ENCODE measurements at regions of chr13 and their contacts with region 1.

Region 1: GRCh38 chr13:22091222-22091970 is 420.5 kb downstream of the FGF9 start:
- DNase-seq: no peak
- H3K4me3 ChIP-seq: no peak overlapping the region
- H3K27ac ChIP-seq: peak overlapping the region in 1 of 2 donors; percentile 19
- H3K4me1 ChIP-seq: peaks cover 0 to 10% of the 10 kb centered on the region in 2 donors
- H3K27me3 ChIP-seq: no peaks in the 10 kb centered on the region
- CTCF ChIP-seq: no peak

Region 2: DNA sequence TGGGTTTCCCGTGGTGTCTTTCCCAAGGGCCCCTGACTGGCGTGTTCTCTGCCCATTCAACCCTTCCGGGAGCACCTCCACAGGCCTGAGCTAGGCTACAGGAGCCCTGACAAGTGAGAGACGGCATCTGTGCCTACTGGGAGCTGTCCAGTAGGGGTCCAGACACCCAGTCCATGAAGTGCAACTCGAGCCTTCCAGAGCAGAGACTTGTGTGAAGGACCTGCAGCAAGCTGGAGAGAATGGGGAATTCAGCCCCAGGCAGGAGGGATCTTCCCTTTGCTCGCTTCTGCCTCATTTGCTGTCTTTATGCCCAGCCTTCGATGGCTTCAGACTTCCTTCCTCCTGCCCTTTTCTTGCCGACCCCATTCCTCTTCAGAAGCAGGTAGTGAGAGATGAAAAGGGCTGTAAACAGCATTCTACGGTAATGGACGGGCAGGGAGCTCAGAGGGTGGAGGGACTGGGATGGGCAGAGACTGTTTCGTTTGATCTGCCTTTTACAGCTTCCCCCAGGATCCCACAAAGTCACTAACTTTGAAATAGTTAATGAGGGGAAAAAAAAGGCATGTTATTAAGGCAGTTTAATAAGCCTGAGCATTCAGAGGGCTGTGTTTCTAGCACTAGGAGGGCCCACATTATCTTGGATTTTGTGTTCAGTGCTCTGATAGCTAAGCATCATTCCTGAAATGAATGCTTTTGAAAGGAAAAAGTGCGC is 93.0 kb before region 1 on chr13:
- intact Hi-C with region 1: no loop called
- DNase-seq: no peak
- H3K4me3 ChIP-seq: no peak overlapping the region
- H3K27ac ChIP-seq: no peak overlapping the region
- H3K4me1 ChIP-seq: no peaks in the 10 kb centered on the region
- H3K27me3 ChIP-seq: no peaks in the 10 kb centered on the region
- CTCF ChIP-seq: no peak

Region 3: DNA sequence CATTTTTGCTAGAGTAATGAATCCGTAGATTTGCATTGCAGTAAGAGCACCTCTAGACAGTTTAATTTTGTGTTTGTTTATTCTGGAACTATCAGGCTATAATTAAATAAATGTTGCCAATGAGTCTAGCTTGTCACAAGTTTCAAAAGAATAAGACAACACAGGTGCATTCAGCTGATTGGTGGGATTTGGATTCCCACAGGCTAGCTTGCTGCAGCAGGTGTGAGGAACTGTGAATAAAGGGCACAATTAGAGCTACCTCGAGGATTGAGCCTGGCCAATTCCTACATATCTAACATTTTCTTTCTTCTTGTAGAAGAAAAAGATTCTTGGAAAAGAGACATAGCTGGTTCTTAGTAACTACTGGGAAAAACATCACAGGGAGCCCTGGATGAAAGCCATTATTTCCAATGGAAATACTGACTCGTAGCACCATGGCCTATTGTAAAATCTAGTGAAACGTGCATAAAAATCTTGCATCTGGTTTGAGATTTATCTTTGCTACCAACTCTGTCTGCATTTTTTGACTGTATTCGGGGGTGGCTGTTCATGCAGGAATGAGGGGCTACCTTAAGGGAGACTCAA is 59.6 kb before region 1 on chr13:
- intact Hi-C with region 1: loop called (anchors 2 kb)
- DNase-seq: no peak
- H3K4me3 ChIP-seq: no peak overlapping the region
- H3K27ac ChIP-seq: peak overlapping the region in 1 of 2 donors; percentile 14
- H3K4me1 ChIP-seq: peaks cover 0 to 2% of the 10 kb centered on the region in 2 donors
- H3K27me3 ChIP-seq: no peaks in the 10 kb centered on the region
- CTCF ChIP-seq: no peak

Region 4: DNA sequence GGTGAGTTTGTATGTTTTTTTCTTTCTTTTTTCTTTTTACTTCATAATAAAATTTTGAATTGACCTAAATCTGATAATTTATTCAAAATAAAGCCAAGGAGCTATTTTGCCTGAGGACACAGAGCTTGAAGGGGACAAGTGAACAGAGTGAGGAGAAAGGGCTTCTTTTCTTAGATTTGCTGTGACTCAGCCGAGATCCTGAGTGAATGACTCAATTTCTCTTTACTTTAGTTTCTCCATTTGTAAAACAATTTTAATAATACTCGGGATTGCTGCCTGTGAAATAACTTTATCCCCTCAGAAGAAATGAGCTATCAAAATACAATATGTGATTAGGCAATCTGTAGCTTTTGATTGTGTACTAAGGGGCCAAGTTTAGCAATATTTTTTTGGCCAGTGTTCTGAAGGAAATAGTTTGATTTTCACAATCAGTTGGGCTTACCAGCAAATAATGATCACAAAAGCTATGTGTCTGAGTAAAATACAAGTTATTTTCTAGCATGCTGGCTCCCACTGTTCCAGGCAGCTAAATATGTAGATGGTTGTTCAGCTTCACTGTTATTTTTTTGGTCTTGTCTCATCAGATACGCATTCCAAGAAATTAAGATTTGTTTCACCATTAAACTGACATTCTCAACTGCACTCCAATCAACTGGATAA is 17.0 kb after region 1 on chr13:
- intact Hi-C with region 1: loop called (anchors 2 kb)
- DNase-seq: no peak
- H3K4me3 ChIP-seq: no peak overlapping the region
- H3K27ac ChIP-seq: peak overlapping the region; percentile 63 to 79
- H3K4me1 ChIP-seq: peaks cover 9 to 38% of the 10 kb centered on the region in 2 donors
- H3K27me3 ChIP-seq: no peaks in the 10 kb centered on the region
- CTCF ChIP-seq: no peak